ENCODE measurements at regions of chr13 and their contacts with region 1.

Region 1: DNA sequence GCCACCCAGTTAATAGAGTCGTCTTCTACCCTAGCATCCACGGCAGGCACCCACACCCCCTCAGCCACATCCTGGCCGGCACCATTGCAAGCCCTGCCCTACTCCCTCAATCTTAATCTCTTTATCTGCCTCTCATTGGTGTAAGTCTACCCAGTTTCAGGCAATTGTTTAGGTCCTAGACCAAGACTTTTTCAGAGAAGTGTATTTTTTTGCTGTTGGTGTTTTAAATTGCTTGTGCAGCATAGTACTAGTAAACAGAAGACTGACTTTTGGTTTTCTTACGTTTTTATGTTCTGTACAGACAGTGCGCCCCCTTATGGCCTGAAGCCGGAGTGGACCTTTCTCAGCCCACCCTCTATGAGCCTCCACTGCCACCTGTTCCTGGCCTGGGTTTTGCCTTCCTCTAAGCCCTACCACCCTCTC is 2.3 kb upstream of the LCP1 start:
- DNase-seq: peak; percentile 61
- ATAC-seq: peak; percentile 53
- H3K4me3 Mint-ChIP-seq: peak overlapping the region; percentile 99
- H3K27ac Mint-ChIP-seq: peak overlapping the region; percentile 98
- H3K4me1 Mint-ChIP-seq: peaks cover 44% of the 10 kb centered on the region
- H3K27me3 Mint-ChIP-seq: no peaks in the 10 kb centered on the region
- CTCF ChIP-seq: no peak

Region 2: GRCh38 chr13:45417790-45418534 is 766.3 kb before region 1 on chr13 and contains the start of gene SLC25A30:
- CTCF ChIA-PET with region 1: no interaction called
- POLR2A ChIA-PET with region 1: interaction called, 3 read pairs
- intact Hi-C with region 1: loop called (anchors 5 kb)
- DNase-seq: peak; percentile 87
- ATAC-seq: peak; percentile 96
- H3K4me3 Mint-ChIP-seq: peak within 1 kb of the TSS; percentile 95
- H3K27ac Mint-ChIP-seq: peak within 1 kb of the TSS; percentile 97
- H3K4me1 Mint-ChIP-seq: peaks cover 22% of the 10 kb centered on the region
- H3K27me3 Mint-ChIP-seq: no peaks in the 10 kb centered on the region
- CTCF ChIP-seq: no peak
- total RNA-seq, gene SLC25A30: 19.0 and 19.3 TPM in 2 replicates

Region 3: DNA sequence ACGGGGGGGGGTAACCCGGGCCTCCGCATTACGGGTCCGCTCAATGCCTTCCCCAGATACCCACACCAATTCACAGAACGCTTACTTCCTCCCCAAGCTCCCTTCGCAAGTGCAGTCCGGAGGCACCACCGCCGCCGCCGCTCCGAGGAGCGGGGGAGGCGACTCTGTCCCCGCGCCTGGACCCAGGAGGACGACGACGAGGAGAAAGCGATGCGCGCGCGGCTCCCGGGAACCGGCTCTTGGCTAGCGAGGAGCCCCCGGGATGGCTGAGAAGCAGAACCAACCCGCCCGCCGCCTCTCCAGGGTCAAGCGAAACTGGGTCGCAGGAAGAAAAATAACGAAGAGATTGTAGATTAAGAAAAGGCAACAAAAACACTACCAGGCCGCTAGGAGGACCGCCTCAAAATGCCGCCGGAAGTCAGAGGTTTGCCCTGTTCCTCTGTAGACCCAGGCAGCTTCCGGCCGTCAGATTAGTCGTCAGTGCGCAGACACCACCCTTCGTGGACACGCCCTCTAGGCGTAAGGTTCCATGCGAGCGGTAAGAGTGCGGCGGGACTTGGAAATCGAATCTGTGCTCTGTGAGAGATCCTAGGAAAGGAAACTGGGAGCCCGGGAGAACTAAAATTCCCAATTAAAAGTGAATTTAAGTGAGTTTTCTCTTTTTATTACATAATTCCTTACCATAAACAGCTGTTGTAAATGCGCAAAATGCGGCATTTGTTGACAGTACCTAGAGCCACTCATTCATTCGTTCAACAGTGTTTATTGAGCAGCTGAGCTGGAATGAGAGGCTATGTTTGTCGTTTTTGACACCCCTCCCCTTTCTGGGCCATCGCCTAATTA is 131.7 kb before region 1 on chr13 and contains the start of gene ZC3H13:
- CTCF ChIA-PET with region 1: no interaction called
- POLR2A ChIA-PET with region 1: interaction called, 10 read pairs
- intact Hi-C with region 1: loop called (anchors 1 kb)
- DNase-seq: peak; percentile 76
- ATAC-seq: peak; percentile 99
- H3K4me3 Mint-ChIP-seq: peak within 1 kb of the TSS; percentile 95
- H3K27ac Mint-ChIP-seq: peak within 1 kb of the TSS; percentile 96
- H3K4me1 Mint-ChIP-seq: peaks cover 39% of the 10 kb centered on the region
- H3K27me3 Mint-ChIP-seq: peaks cover 1% of the 10 kb centered on the region
- CTCF ChIP-seq: no peak
- total RNA-seq, gene ZC3H13: 48.1 and 48.7 TPM in 2 replicates

Region 4: GRCh38 chr13:46146899-46147298 is 37.4 kb before region 1 on chr13:
- CTCF ChIA-PET with region 1: interaction called, 4 read pairs
- POLR2A ChIA-PET with region 1: interaction called, 4 read pairs
- intact Hi-C with region 1: loop called (anchors 5 kb)
- DNase-seq: no peak
- ATAC-seq: no peak
- H3K4me3 Mint-ChIP-seq: no peak overlapping the region
- H3K27ac Mint-ChIP-seq: no peak overlapping the region
- H3K4me1 Mint-ChIP-seq: peaks cover 4% of the 10 kb centered on the region
- H3K27me3 Mint-ChIP-seq: no peaks in the 10 kb centered on the region
- CTCF ChIP-seq: no peak

Region 5: DNA sequence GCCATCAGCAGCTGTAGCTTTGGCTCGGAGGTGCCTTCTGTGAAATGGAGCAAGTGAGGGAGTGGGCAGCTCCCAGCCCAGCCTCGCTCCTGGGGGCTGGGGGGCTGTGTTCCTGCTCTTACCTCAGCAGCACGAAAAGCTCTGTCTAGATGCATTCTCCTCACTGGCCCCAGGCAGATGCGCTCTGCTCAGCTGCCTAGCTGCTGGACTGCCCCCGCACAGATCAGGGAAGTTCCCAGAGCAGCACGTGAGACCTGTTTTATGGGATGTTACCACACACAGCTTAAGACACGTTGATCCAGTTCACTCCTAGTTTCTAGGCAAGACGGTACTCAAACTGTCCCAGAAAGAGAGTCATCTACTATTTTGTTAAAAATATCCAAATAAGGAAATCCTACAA is 15.9 kb before region 1 on chr13:
- CTCF ChIA-PET with region 1: interaction called, 20 read pairs
- POLR2A ChIA-PET with region 1: interaction called, 247 read pairs
- intact Hi-C with region 1: loop called (anchors 1 kb)
- DNase-seq: peak; percentile 31
- ATAC-seq: peak; percentile 28
- H3K4me3 Mint-ChIP-seq: peak overlapping the region; percentile 79
- H3K27ac Mint-ChIP-seq: peak overlapping the region; percentile 85
- H3K4me1 Mint-ChIP-seq: peaks cover 98% of the 10 kb centered on the region
- H3K27me3 Mint-ChIP-seq: no peaks in the 10 kb centered on the region
- CTCF ChIP-seq: no peak

Region 6: DNA sequence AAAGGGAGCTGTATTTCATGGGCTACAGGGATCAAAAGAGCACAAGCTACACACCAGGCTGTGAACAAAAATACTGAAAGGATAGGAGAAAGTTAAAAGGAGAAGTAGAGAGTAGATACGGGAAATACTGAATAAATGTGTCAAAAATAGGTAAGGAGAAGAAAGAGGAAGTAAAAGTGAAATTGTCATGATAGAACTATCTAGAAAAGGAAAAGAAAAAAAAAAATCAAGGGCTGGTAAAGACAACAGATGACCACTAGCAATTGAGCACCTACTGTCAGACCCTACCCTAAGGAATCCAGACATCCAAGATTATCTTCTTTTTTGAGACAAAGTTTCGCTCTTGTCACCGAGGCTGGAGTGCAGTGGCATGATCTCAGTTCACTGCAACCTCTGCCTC is 197.9 kb after region 1 on chr13:
- CTCF ChIA-PET with region 1: no interaction called
- POLR2A ChIA-PET with region 1: interaction called, 14 read pairs
- intact Hi-C with region 1: loop called (anchors 2 kb)
- DNase-seq: no peak
- ATAC-seq: peak; percentile 42
- H3K4me3 Mint-ChIP-seq: peak overlapping the region; percentile 72
- H3K27ac Mint-ChIP-seq: peak overlapping the region; percentile 93
- H3K4me1 Mint-ChIP-seq: peaks cover 75% of the 10 kb centered on the region
- H3K27me3 Mint-ChIP-seq: no peaks in the 10 kb centered on the region
- CTCF ChIP-seq: no peak

Region 7: DNA sequence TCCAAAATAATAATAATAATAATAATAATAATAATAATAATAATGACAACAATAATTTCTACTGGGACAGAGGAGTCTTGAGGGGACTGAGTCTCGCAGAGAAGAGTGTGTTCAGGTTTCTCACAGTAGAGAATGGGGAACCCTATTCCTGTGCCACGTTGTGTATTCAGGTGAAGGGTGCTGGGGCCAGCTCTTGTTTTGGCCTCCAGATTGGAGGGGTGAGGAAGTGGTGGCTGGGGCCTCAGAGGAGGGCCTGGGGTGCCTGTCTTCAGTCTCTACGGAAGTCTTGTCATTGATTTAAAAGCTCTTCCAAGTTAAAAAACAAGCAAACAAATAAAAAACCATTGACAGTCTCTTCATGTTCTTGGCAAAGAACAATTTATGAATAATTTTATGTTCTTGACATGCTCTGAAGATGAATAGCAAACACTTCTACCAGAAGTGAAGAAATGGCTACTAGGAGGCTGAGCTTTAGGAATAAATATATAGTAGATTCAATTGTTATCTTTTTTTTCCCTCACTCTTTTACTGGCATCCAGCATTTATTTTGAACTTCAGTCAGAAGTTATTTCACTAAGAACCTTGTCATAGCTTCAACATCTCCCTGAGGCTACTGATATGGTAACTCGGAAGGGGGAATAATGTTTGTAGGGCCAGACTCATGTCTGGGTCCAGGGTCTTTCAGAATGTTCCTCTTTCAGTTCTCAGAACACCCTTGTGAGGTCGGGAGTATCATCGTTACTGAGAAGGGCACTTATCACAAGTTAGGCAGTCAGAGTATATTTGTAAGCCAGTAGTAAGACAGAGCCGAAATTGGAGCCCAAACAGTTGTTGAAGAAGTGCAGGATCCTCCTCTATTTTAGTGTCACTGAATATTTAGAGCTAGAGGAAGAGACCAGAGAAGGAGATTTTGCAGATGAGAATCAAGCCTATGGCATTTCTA is 381.8 kb after region 1 on chr13:
- CTCF ChIA-PET with region 1: no interaction called
- POLR2A ChIA-PET with region 1: no interaction called
- intact Hi-C with region 1: no loop called
- DNase-seq: no peak
- ATAC-seq: peak; percentile 82
- H3K4me3 Mint-ChIP-seq: no peak overlapping the region
- H3K27ac Mint-ChIP-seq: peak overlapping the region; percentile 14
- H3K4me1 Mint-ChIP-seq: peaks cover 65% of the 10 kb centered on the region
- H3K27me3 Mint-ChIP-seq: no peaks in the 10 kb centered on the region
- CTCF ChIP-seq: no peak

Region 8: GRCh38 chr13:46595136-46595886 is 411.0 kb after region 1 on chr13:
- CTCF ChIA-PET with region 1: no interaction called
- POLR2A ChIA-PET with region 1: no interaction called
- intact Hi-C with region 1: loop called (anchors 5 kb)
- DNase-seq: no peak
- ATAC-seq: peak; percentile 74
- H3K4me3 Mint-ChIP-seq: peak overlapping the region; percentile 60
- H3K27ac Mint-ChIP-seq: peak overlapping the region; percentile 86
- H3K4me1 Mint-ChIP-seq: peaks cover 95% of the 10 kb centered on the region
- H3K27me3 Mint-ChIP-seq: no peaks in the 10 kb centered on the region
- CTCF ChIP-seq: no peak

Measured in activated B cell treated with CpG ODN at 0.5 μM for 24 hours (primary cell).